ENCODE measurements at regions of chr12 and their contacts with region 1.

Region 1: DNA sequence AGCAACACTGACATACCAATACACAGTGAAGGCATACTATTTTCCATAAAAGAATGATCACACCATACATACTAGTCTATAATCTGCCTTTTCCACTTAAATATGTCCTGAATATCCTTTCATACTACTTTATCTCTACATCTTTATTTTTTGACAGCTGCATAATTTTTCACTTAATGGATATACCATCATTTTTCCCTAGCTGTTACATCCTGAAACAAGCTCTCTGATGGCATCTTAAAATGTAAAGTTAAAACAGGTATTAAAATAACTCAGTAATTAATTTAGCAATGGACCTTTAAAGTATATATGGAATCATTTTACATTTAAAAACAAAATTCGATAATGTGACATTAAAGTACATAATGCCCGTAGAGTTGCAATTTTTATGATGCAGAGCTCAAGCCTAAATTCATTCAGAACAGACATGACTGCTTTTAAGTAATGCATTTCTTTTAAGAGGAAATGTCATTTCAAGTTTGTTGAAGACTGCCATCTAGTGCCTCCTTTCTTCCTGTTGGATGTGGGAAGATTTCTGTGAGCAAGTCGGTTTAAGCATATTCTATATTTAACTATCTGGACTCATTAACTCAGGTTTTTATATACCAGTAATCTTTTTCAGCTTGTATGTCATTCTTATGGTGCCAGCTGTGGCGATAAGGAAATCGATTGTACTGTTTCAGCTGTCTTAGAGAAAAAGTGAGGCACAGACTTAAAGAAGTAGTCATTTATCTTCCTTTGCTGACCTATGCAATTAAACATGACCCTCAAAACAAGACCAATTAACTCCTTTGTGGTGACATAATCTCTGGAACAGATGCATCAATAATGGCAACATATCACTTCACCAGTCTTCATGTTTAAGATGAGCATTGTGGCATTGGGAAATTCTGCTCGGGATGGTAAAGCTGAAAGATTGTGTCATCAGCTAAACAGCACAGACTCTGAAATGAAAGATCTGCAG is 20.3 kb downstream of the PRICKLE1 start:
- DNase-seq: peak in 1 of 6 donors; percentile 11
- ATAC-seq: peak; percentile 81 to 89 (median 88)
- H3K4me3 ChIP-seq: no peak overlapping the region
- H3K27ac ChIP-seq: peak overlapping the region; percentile 43 to 67 (median 46)
- H3K4me1 ChIP-seq: peaks cover 9 to 15% (median 11%) of the 10 kb centered on the region in 3 donors
- H3K27me3 ChIP-seq: no peaks in the 10 kb centered on the region
- CTCF ChIP-seq: peak in 3 of 4 donors; percentile 24 to 38 (median 36)

Region 2: DNA sequence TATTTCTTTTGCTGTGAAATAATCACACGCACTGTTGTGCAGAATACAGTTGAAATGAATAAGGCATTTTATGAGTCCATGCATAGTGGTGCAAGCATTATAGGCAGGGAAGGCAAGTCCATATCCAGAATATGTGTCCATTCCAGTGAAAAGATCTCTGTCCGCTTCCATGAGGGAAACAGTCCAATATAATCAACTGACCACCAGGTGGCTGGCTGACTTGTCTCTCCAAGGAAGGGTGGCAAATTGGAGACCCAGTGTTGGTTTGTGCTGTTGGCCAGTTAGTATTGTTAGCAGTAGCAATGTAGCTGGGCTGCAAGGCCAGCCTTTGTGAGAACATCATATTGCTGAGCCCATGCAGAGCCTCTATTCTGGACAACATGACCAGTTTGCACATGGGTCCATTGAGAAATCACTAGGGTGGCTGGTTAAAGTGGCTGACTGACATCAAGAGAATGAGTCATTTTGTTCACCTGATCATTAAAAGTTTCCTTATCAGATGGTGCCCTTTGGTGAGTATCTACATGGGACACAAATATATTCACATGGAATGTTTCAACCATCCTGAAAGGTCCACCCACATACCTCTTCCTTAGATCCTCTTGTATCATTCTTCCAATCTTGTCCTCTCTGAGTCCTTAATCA is 313.9 kb before region 1 on chr12:
- intact Hi-C with region 1: no loop called
- DNase-seq: no peak
- ATAC-seq: no peak
- H3K4me3 ChIP-seq: no peak overlapping the region
- H3K27ac ChIP-seq: no peak overlapping the region
- H3K4me1 ChIP-seq: no peaks in the 10 kb centered on the region
- H3K27me3 ChIP-seq: no peaks in the 10 kb centered on the region
- CTCF ChIP-seq: no peak

Region 3: GRCh38 chr12:42442308-42442759 is 126.9 kb before region 1 on chr12:
- intact Hi-C with region 1: no loop called
- DNase-seq: no peak
- ATAC-seq: no peak
- H3K4me3 ChIP-seq: no peak overlapping the region
- H3K27ac ChIP-seq: no peak overlapping the region
- H3K4me1 ChIP-seq: peaks cover 0 to 5% (median 0%) of the 10 kb centered on the region in 3 donors
- H3K27me3 ChIP-seq: no peaks in the 10 kb centered on the region
- CTCF ChIP-seq: no peak

Region 4: GRCh38 chr12:42482445-42483237 is 86.6 kb before region 1 on chr12:
- intact Hi-C with region 1: loop called in 1 of 3 experiments (anchors 10 kb)
- DNase-seq: peak in 5 of 6 donors; percentile 62 to 93 (median 70)
- ATAC-seq: peak; percentile 85 to 94 (median 90)
- H3K4me3 ChIP-seq: peak overlapping the region; percentile 69 to 85 (median 83)
- H3K27ac ChIP-seq: peak overlapping the region in 3 of 4 donors; percentile 29 to 62 (median 60)
- H3K4me1 ChIP-seq: peaks cover 0 to 4% (median 3%) of the 10 kb centered on the region in 3 donors
- H3K27me3 ChIP-seq: no peaks in the 10 kb centered on the region
- CTCF ChIP-seq: peak; percentile 74 to 92 (median 88)

Region 5: GRCh38 chr12:42490261-42490842 is 78.9 kb before region 1 on chr12:
- intact Hi-C with region 1: loop called in 2 of 3 experiments (anchors 5 to 10 kb)
- DNase-seq: no peak
- ATAC-seq: no peak
- H3K4me3 ChIP-seq: no peak overlapping the region
- H3K27ac ChIP-seq: no peak overlapping the region
- H3K4me1 ChIP-seq: no peaks in the 10 kb centered on the region
- H3K27me3 ChIP-seq: no peaks in the 10 kb centered on the region
- CTCF ChIP-seq: no peak

Region 6: GRCh38 chr12:42534184-42534838 is 34.9 kb before region 1 on chr12:
- intact Hi-C with region 1: no loop called
- DNase-seq: no peak
- ATAC-seq: no peak
- H3K4me3 ChIP-seq: no peak overlapping the region
- H3K27ac ChIP-seq: no peak overlapping the region
- H3K4me1 ChIP-seq: no peaks in the 10 kb centered on the region
- H3K27me3 ChIP-seq: no peaks in the 10 kb centered on the region
- CTCF ChIP-seq: no peak

Region 7: DNA sequence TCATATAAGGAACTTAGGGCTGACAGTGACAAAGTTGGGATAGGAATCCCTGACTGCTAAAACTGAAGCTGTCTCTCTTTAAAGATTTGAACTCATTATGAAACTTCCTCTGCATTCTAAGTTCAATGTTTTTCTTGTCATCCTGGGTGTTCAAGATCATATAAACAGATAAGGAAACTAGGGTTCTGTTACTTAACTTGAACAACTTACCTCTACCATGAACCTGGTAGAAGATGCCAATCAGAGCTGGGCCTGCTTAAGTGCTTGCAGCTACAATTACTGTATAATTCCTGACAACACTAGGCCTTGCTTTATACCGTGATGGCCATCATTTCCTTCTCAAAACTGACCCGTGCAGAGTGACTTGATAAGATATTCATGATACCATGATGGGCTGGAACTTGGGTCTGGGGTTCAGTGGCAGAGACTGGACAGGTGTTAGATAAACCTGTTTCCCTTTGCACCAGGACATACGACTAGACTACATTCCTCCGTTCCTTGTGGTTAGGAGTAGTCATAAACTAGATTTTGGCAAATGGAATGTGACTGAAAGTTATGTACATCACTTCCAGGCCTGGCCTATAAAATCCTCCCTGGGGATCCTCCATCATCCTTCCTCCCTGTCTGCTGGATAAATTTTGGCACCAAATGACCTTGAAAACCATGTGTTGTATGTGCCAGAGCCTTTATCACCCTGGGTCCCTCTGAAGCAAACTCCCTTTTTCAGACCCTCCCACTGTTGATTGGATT is 192.5 kb after region 1 on chr12:
- intact Hi-C with region 1: no loop called
- DNase-seq: no peak
- ATAC-seq: no peak
- H3K4me3 ChIP-seq: no peak overlapping the region
- H3K27ac ChIP-seq: no peak overlapping the region
- H3K4me1 ChIP-seq: peaks cover 0 to 9% (median 7%) of the 10 kb centered on the region in 3 donors
- H3K27me3 ChIP-seq: no peaks in the 10 kb centered on the region
- CTCF ChIP-seq: no peak

Measured in pancreas (tissue), 10 donors.